Tibial artery (tissue), 4 donors: ENCODE measurements at regions of chr7 and their contacts with region 1.

Region 1: DNA sequence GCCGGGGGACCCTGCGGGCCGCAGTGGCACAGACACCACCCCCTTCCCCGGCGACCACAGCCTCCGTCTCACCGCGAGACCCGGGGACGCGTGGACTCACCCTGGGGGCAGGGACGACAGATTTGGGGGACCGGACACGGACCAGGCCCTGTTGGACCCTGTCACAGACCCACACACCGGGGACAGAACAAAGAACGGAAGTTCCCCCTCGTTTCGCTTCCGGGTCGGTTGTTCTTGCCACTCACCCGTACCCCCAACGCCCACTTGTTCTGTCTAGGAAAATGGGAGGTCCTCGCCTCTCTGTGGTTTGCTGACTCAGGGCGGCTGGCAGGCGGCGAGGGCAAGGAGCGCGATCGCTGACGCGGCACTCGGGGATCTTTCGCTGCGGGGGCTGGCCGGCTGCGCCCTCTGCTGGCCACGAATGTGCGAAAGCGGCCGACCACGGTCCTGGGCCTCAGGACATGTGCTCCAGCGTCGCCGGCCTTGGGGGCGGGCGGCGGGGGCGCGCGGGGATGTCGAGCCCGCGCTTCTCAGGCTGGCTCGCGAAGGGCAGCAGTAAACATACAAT is at the start of gene ZNF3:
- DNase-seq: peak; percentile 98 to 99
- H3K4me3 ChIP-seq: peak within 1 kb of the TSS; percentile 95 to 98
- H3K27ac ChIP-seq: peak within 1 kb of the TSS; percentile 82 to 88
- H3K4me1 ChIP-seq: peaks cover 5 to 40% (median 25%) of the 10 kb centered on the region in 4 donors
- H3K27me3 ChIP-seq: no peaks in the 10 kb centered on the region
- CTCF ChIP-seq: peak; percentile 91 to 93

Region 2: DNA sequence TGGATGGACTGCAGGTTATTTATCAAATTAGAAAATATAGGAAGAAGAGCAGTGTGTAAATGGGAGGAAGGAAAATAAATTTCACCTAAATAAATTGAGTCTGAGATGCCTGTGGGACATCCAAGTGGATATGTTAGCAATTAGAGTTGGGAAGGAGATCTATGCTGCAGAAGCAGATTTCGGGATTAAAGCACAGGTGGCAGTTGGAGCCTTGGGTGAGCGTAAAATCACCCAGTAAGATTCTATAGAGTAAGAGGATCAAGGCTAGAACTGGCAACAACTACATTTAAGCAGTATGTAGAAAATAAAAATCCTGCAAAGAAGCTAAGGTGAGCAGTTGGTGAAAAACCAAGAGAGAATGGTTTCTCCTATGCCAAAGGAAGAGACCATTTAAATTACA is 170.6 kb before region 1 on chr7:
- intact Hi-C with region 1: no loop called
- DNase-seq: no peak
- H3K4me3 ChIP-seq: no peak overlapping the region
- H3K27ac ChIP-seq: no peak overlapping the region
- H3K4me1 ChIP-seq: peaks cover 0 to 16% (median 9%) of the 10 kb centered on the region in 4 donors
- H3K27me3 ChIP-seq: no peaks in the 10 kb centered on the region
- CTCF ChIP-seq: no peak

Region 3: GRCh38 chr7:100049441-100050311 is 31.9 kb before region 1 on chr7 and contains the start of gene ZSCAN21:
- intact Hi-C with region 1: loop called (anchors 5 kb)
- DNase-seq: peak; percentile 86 to 90
- H3K4me3 ChIP-seq: peak within 1 kb of the TSS; percentile 69 to 97
- H3K27ac ChIP-seq: peak within 1 kb of the TSS; percentile 92 to 98
- H3K4me1 ChIP-seq: peaks cover 0 to 15% (median 10%) of the 10 kb centered on the region in 4 donors
- H3K27me3 ChIP-seq: no peaks in the 10 kb centered on the region
- CTCF ChIP-seq: peak in 1 of 2 experiments; percentile 12

Region 4: GRCh38 chr7:100221231-100221718 is 139.7 kb after region 1 on chr7:
- intact Hi-C with region 1: no loop called
- DNase-seq: no peak
- H3K4me3 ChIP-seq: no peak overlapping the region
- H3K27ac ChIP-seq: no peak overlapping the region
- H3K4me1 ChIP-seq: no peaks in the 10 kb centered on the region
- H3K27me3 ChIP-seq: no peaks in the 10 kb centered on the region
- CTCF ChIP-seq: no peak

Region 5: GRCh38 chr7:100428199-100428966 is 346.8 kb after region 1 on chr7 and contains the start of gene ZCWPW1:
- intact Hi-C with region 1: no loop called
- DNase-seq: peak; percentile 96 to 98
- H3K4me3 ChIP-seq: peak within 1 kb of the TSS; percentile 83 to 94
- H3K27ac ChIP-seq: peak within 1 kb of the TSS; percentile 99 to 100
- H3K4me1 ChIP-seq: peaks cover 0 to 36% (median 26%) of the 10 kb centered on the region in 4 donors
- H3K27me3 ChIP-seq: no peaks in the 10 kb centered on the region
- CTCF ChIP-seq: no peak